Mammary epithelial cell (primary cell): ENCODE measurements at regions of chr1 and their contacts with region 1.

Region 1: GRCh38 chr1:47738560-47739182 is 258.5 kb downstream of the TRABD2B start:
- DNase-seq: peak; percentile 32
- H3K4me3 ChIP-seq: no peak overlapping the region
- H3K27ac ChIP-seq: no peak overlapping the region
- H3K4me1 ChIP-seq: no peaks in the 10 kb centered on the region
- H3K27me3 ChIP-seq: no peaks in the 10 kb centered on the region
- CTCF ChIP-seq: peak; percentile 76 to 89

Region 2: GRCh38 chr1:47313915-47314664 is 424.6 kb before region 1 on chr1 and contains the start of gene STIL:
- CTCF ChIA-PET with region 1: no interaction called
- dilution Hi-C with region 1: no loop called
- in situ Hi-C with region 1: no loop called
- intact Hi-C with region 1: no loop called
- DNase-seq: peak; percentile 100
- H3K4me3 ChIP-seq: peak within 1 kb of the TSS; percentile 85 to 95 (median 90)
- H3K27ac ChIP-seq: peak within 1 kb of the TSS; percentile 95
- H3K4me1 ChIP-seq: peaks cover 3% of the 10 kb centered on the region
- H3K27me3 ChIP-seq: no peaks in the 10 kb centered on the region
- CTCF ChIP-seq: peak in 1 of 2 donors; percentile 1
- total RNA-seq, gene STIL: 8.0 to 17.9 TPM

Region 3: GRCh38 chr1:47637111-47637685 is 101.5 kb before region 1 on chr1:
- CTCF ChIA-PET with region 1: no interaction called
- dilution Hi-C with region 1: no loop called
- in situ Hi-C with region 1: no loop called
- intact Hi-C with region 1: no loop called
- DNase-seq: peak; percentile 53
- H3K4me3 ChIP-seq: no peak overlapping the region
- H3K27ac ChIP-seq: no peak overlapping the region
- H3K4me1 ChIP-seq: no peaks in the 10 kb centered on the region
- H3K27me3 ChIP-seq: no peaks in the 10 kb centered on the region
- CTCF ChIP-seq: no peak

Region 4: GRCh38 chr1:47785561-47786271 is 47.0 kb after region 1 on chr1:
- CTCF ChIA-PET with region 1: no interaction called
- dilution Hi-C with region 1: no loop called
- in situ Hi-C with region 1: no loop called
- intact Hi-C with region 1: loop called (anchors 1 kb)
- DNase-seq: peak; percentile 6
- H3K4me3 ChIP-seq: no peak overlapping the region
- H3K27ac ChIP-seq: no peak overlapping the region
- H3K4me1 ChIP-seq: no peaks in the 10 kb centered on the region
- H3K27me3 ChIP-seq: no peaks in the 10 kb centered on the region
- CTCF ChIP-seq: peak; percentile 22 to 52

Region 5: GRCh38 chr1:47840393-47841190 is 101.9 kb after region 1 on chr1:
- CTCF ChIA-PET with region 1: no interaction called
- dilution Hi-C with region 1: no loop called
- in situ Hi-C with region 1: no loop called
- intact Hi-C with region 1: no loop called
- DNase-seq: no peak
- H3K4me3 ChIP-seq: no peak overlapping the region
- H3K27ac ChIP-seq: no peak overlapping the region
- H3K4me1 ChIP-seq: no peaks in the 10 kb centered on the region
- H3K27me3 ChIP-seq: peaks cover 2% of the 10 kb centered on the region
- CTCF ChIP-seq: no peak